ENCODE measurements at regions of chr12 and their contacts with region 1.

Region 1: GRCh38 chr12:49279706-49280159 is 14.9 kb downstream of the TUBA1C start:
- DNase-seq: no peak
- H3K4me3 ChIP-seq: no peak overlapping the region
- H3K27ac ChIP-seq: no peak overlapping the region
- H3K4me1 ChIP-seq: peaks cover 3% of the 10 kb centered on the region
- H3K27me3 ChIP-seq: no peaks in the 10 kb centered on the region
- CTCF ChIP-seq: no peak

Region 2: DNA sequence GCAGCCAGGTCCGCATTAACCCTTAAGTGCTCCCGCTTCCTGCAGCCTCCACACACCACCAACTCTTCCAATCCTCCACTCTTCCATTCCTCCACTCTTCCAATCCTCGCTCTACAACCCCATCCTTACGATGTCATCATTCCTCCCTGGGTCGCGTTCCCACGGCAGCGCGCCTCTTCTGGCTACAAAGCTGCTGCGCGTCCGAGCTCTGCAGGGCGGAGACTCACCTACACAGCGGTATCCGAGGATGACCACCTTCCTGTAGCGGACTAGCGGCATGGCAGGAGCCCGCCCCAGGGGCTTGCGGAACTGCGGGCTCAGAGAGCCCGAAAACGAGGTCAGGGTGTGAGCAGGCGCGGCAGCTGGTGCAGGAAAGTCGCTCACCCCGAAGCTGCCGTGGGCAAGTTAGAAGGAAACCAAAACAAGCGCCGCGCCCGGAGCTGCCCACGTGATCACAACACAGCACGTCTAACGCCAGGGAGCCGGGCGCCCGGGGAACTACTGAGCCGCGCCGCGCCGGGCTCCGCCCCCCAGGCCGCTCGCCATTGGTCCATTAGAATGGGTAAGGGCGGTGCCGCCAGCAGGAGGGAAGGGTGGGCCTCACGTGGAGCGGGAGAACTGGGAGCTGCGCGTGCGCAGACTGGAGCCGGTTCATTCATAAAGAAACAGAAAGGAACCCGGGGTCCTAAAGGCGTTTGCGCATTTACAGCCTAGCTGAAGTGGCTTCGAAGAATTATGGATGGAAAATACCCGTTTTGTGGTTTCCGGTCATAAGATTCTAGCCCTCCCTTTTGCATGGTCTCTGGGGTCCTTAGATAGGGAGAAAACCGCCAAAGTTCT is 210.0 kb before region 1 on chr12 and contains the start of gene RHEBL1:
- CTCF ChIA-PET with region 1: no interaction called
- dilution Hi-C with region 1: no loop called
- in situ Hi-C with region 1: no loop called
- intact Hi-C with region 1: no loop called
- DNase-seq: peak; percentile 98
- H3K4me3 ChIP-seq: peak within 1 kb of the TSS; percentile 64 to 81 (median 72)
- H3K27ac ChIP-seq: peak within 1 kb of the TSS; percentile 45
- H3K4me1 ChIP-seq: peaks cover 12% of the 10 kb centered on the region
- H3K27me3 ChIP-seq: no peaks in the 10 kb centered on the region
- CTCF ChIP-seq: peak in 1 of 2 donors; percentile 30
- total RNA-seq, gene RHEBL1: 1.0 to 2.3 TPM

Region 3: GRCh38 chr12:49322708-49323523 is 43.2 kb after region 1 on chr12 and contains the start of gene TROAP:
- CTCF ChIA-PET with region 1: no interaction called
- dilution Hi-C with region 1: loop called (anchors 5 kb)
- in situ Hi-C with region 1: no loop called
- intact Hi-C with region 1: no loop called
- DNase-seq: peak; percentile 99
- H3K4me3 ChIP-seq: peak within 1 kb of the TSS; percentile 77 to 81 (median 78)
- H3K27ac ChIP-seq: peak within 1 kb of the TSS; percentile 64
- H3K4me1 ChIP-seq: peaks cover 14% of the 10 kb centered on the region
- H3K27me3 ChIP-seq: no peaks in the 10 kb centered on the region
- CTCF ChIP-seq: no peak
- total RNA-seq, gene TROAP: 0.33 to 34.2 TPM

Region 4: DNA sequence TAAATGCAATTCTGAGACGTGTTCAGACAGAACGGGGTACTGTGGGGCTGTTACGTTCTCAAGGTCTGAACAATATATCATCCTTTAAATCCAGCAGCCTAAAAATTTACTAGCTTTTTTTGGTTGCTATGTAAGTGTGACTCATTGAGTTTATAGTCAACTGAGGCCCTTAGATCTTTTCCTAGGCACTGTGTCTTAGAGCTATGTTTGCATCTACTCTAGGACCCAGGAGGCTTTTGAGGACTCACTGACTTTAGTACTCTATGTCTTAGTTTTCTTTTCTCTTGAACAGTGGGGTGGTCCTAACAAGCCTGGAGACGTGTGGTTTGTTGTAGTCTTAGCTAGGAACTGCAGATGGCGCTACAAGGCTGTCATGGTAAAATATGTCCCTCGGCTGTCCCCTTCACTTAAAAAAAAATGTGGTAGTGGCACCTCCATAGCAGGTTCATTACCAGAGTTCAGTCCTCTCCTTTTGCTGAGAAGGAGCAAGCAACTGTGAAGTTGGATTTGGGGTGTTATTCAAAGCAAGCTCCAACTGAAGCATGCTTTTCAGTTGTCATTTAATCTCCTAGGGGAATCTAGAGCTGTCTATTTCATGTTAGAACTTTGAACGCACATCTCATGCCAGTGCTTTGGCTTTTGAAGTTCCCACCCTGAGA is 78.9 kb after region 1 on chr12:
- CTCF ChIA-PET with region 1: no interaction called
- dilution Hi-C with region 1: no loop called
- in situ Hi-C with region 1: no loop called
- intact Hi-C with region 1: no loop called
- DNase-seq: peak; percentile 71
- H3K4me3 ChIP-seq: no peak overlapping the region
- H3K27ac ChIP-seq: peak overlapping the region; percentile 20
- H3K4me1 ChIP-seq: peaks cover 23% of the 10 kb centered on the region
- H3K27me3 ChIP-seq: no peaks in the 10 kb centered on the region
- CTCF ChIP-seq: peak; percentile 66 to 84